ENCODE measurements at regions of chr17 and their contacts with region 1.

Region 1: GRCh38 chr17:20077978-20078685 is 69.0 kb downstream of the SPECC1 start:
- DNase-seq: no peak
- ATAC-seq: no peak
- H3K4me3 ChIP-seq: no peak overlapping the region
- H3K4me3 Mint-ChIP-seq: no peak overlapping the region
- H3K27ac ChIP-seq: no peak overlapping the region
- H3K27ac Mint-ChIP-seq: no peak overlapping the region
- H3K4me1 ChIP-seq: peaks cover 16% of the 10 kb centered on the region
- H3K4me1 Mint-ChIP-seq: peaks cover 20% of the 10 kb centered on the region
- H3K27me3 ChIP-seq: no peaks in the 10 kb centered on the region
- H3K27me3 Mint-ChIP-seq: peaks cover 3% of the 10 kb centered on the region
- CTCF ChIP-seq: no peak

Region 2: DNA sequence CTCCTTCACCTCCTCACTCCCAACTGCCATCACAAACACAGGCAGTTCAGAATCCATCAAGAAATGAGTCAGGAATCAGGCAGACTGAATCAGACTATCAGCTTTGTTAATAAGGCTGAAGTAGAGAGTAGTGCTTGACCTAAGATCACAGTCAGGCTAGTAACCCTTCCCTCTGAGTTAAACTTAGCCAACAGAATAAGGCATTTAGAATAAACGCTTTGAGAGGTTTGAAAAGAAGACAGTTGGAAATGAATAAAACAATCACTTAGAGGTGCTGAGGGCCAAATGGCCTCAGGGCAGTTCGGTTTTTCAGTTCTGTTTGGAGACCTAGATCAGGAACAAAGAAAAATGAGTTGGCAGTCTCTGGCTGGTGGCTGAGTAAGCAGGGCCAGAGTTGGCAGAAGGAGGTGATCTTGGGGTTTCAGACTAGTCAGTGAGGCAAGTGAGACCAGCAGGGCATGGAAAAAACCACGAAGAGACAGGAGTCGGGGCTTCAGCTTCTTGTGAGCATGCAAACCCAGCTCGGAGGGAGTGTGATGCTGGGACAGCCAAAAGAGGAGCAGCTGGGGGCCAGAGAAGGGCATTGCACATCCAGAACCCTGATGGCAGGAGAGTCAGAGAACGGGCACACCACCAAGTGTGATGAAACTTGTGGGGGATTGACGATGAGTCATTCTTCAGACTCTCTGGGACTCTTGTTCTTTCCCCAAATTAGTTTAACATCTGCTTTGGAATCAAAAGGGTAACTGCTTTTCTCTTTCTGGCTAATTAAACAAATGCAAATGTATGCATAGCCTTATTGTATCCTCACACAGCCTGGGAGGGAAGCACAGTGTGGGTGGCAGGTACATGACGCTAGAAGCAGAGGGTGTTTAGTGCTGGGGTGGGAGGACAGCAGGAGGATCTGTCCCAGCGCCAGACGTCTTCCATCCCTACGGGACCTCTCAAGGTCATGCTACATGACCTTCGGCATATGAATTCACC is 14.2 kb before region 1 on chr17:
- CTCF ChIA-PET with region 1: interaction called, 4 read pairs
- POLR2A ChIA-PET with region 1: no interaction called
- intact Hi-C with region 1: loop called in 1 of 2 experiments (anchors 2 kb)
- DNase-seq: peak in 1 of 9 experiments; percentile 22
- ATAC-seq: no peak
- H3K4me3 ChIP-seq: no peak overlapping the region
- H3K4me3 Mint-ChIP-seq: no peak overlapping the region
- H3K27ac ChIP-seq: no peak overlapping the region
- H3K27ac Mint-ChIP-seq: no peak overlapping the region
- H3K4me1 ChIP-seq: no peaks in the 10 kb centered on the region
- H3K4me1 Mint-ChIP-seq: no peaks in the 10 kb centered on the region
- H3K27me3 ChIP-seq: no peaks in the 10 kb centered on the region
- H3K27me3 Mint-ChIP-seq: no peaks in the 10 kb centered on the region
- CTCF ChIP-seq: no peak